RWPE1 (cell line): ENCODE measurements at regions of chr10 and their contacts with region 1.

Region 1: GRCh38 chr10:114470956-114471905 is 66.9 kb upstream of the AFAP1L2 start:
- DNase-seq: peak; percentile 74
- H3K27ac ChIP-seq: no peak overlapping the region
- CTCF ChIP-seq: peak; percentile 84

Region 2: DNA sequence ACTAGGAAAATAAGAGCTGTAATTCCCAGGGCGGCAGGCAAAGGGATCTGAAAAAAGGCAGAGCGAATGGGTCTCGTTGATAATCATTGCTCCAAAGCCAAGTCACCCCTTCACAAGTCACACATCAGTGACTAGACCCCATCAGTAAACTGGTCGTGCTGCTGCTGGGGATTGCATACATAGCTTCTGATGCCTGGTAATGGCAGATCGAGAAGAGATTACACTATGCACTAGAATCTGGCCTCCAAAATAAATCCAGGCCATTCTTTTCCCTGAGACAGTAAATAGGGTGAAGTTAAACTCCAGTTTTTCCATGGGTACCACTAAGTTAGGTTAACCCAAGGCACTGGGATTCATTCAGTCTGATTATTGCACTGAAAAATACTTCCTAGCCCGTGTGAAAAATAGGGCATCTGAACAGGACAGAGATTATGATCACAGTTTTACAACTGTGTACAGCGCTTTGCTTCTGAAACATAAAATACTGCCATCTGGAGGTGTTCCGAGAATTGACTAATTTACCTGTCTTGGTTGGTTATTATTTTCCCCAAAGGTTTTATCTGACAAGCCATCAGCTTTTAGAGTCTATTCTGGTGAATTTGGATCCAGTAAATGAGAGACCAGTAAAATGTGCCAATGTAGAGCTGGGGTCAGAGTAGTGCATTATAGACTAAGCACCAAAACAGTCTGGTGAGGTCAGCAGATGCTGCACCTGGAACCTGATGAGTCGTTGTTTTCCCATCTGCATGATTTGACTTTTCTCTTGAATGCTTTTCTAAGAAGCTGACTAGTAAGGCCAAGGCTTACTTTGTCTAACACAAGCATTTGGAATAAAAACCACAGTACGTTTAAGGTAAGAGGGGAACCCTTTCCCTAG is 15.9 kb after region 1 on chr10:
- CTCF ChIA-PET with region 1: interaction called, 14 read pairs
- POLR2A ChIA-PET with region 1: no interaction called
- DNase-seq: peak; percentile 26
- H3K27ac ChIP-seq: no peak overlapping the region
- CTCF ChIP-seq: no peak

Region 3: GRCh38 chr10:114541081-114541796 is 70.0 kb after region 1 on chr10:
- CTCF ChIA-PET with region 1: interaction called, 12 read pairs
- POLR2A ChIA-PET with region 1: no interaction called
- DNase-seq: no peak
- H3K27ac ChIP-seq: peak overlapping the region; percentile 60
- CTCF ChIP-seq: no peak

Region 4: GRCh38 chr10:114550756-114551635 is 79.8 kb after region 1 on chr10:
- CTCF ChIA-PET with region 1: interaction called, 12 read pairs
- POLR2A ChIA-PET with region 1: no interaction called
- DNase-seq: no peak
- H3K27ac ChIP-seq: no peak overlapping the region
- CTCF ChIP-seq: peak; percentile 30; the same call in 1 of the 2 replicates